ENCODE measurements at regions of chr11 and their contacts with region 1.

Region 1: GRCh38 chr11:65637794-65638317 is at the start of gene SIPA1:
- DNase-seq: peak; percentile 86
- ATAC-seq: peak; percentile 35
- H3K4me3 Mint-ChIP-seq: peak within 1 kb of the TSS; percentile 94
- H3K27ac Mint-ChIP-seq: peak within 1 kb of the TSS; percentile 96
- H3K4me1 Mint-ChIP-seq: peaks cover 51% of the 10 kb centered on the region
- H3K27me3 Mint-ChIP-seq: no peaks in the 10 kb centered on the region
- CTCF ChIP-seq: no peak
- total RNA-seq, gene SIPA1: 236 and 252 TPM in 2 replicates

Region 2: GRCh38 chr11:65575568-65576231 is 62.2 kb before region 1 on chr11 and contains the start of gene EHBP1L1:
- CTCF ChIA-PET with region 1: interaction called, 5 read pairs
- POLR2A ChIA-PET with region 1: interaction called, 39 read pairs
- intact Hi-C with region 1: loop called (anchors 1 kb)
- DNase-seq: peak; percentile 76
- ATAC-seq: peak; percentile 22
- H3K4me3 Mint-ChIP-seq: peak within 1 kb of the TSS; percentile 91
- H3K27ac Mint-ChIP-seq: peak within 1 kb of the TSS; percentile 93
- H3K4me1 Mint-ChIP-seq: peaks cover 64% of the 10 kb centered on the region
- H3K27me3 Mint-ChIP-seq: no peaks in the 10 kb centered on the region
- CTCF ChIP-seq: no peak
- total RNA-seq, gene EHBP1L1: 143 and 163 TPM in 2 replicates

Region 3: DNA sequence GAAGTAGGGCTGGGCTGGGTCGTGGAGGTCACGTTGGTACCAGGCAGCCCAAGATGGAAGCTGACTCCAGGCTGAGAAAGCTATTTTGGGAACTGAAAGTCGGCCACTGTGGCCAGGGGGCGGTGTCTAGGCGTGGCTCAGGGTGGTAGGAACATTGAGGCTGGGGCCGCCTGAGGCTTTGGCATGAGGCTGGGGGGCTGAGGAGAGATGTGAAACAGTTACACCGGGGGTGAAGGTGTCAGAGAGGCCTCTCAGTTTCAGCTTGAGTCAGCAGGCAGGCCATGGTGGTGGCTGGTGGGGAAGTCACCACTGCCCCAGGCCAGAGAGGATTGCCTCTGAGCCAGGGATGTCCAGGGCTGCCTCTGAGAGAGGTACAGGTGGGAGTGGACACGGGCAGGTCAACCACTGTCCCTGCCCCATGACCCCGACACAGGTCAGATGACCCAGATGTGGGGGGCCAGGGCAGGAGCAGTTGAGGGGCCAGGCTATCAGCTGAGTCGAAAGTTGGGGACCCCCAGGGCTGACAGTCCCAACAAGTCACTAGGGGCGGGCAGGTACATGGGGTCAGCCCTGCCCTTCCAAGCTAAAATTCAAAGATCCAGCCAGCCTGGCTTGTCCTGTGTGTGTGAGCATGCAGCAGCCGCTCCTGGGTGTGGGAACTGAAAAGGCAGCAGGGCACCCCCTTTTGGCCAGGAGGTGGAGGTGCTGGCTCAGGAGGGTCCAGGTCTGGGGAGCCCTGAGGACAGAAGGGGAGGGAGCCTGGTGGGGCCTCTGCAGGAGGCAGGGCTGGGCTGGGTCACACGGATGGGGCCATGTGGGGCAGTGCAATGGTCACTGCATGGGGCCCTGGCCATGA is 49.4 kb before region 1 on chr11:
- CTCF ChIA-PET with region 1: interaction called, 5 read pairs
- POLR2A ChIA-PET with region 1: interaction called, 26 read pairs
- intact Hi-C with region 1: no loop called
- DNase-seq: peak; percentile 76
- ATAC-seq: peak; percentile 80
- H3K4me3 Mint-ChIP-seq: peak overlapping the region; percentile 70
- H3K27ac Mint-ChIP-seq: peak overlapping the region; percentile 96
- H3K4me1 Mint-ChIP-seq: peaks cover 44% of the 10 kb centered on the region
- H3K27me3 Mint-ChIP-seq: no peaks in the 10 kb centered on the region
- CTCF ChIP-seq: peak; percentile 38

Region 4: DNA sequence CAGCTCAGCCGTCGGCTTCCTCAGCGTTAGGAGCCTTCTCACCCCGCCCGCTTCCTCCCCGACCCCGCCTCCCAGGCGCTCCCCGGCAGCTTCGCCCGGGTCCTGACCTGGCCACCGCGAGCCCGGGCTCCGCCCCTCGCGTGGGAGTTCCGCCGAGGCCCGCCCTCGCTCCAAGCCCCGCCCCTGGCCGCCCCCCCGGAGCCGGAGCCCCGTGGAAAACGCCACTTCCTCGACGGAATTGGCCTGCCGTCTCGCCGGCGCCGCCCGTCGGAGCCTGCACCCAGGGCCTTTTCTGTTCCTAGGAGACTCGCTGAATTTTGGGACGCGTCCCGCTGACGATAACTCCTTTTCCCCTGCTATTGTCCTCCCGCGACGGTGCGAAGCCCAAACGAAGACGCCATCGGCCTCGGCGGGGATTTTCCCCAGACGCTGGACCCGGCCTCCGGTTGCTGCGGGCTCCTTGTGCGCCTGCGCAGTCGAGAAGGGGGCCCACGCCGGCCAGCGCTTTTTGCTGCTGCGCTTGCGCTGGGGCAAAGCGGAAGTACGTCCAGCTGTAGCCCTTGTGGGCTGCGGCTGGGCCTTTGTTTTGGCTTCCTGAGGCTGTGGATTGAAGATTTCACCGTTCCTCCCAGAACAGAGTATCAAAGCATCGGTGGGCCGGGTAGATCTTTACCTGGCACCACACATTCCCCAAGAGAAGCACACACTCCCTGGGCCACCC is 14.8 kb after region 1 on chr11:
- CTCF ChIA-PET with region 1: interaction called, 5 read pairs
- POLR2A ChIA-PET with region 1: interaction called, 617 read pairs
- intact Hi-C with region 1: loop called (anchors 1 kb)
- DNase-seq: peak; percentile 98
- ATAC-seq: peak; percentile 89
- H3K4me3 Mint-ChIP-seq: peak overlapping the region; percentile 90
- H3K27ac Mint-ChIP-seq: peak overlapping the region; percentile 95
- H3K4me1 Mint-ChIP-seq: peaks cover 44% of the 10 kb centered on the region
- H3K27me3 Mint-ChIP-seq: no peaks in the 10 kb centered on the region
- CTCF ChIP-seq: no peak

Region 5: GRCh38 chr11:65662799-65663638 is 25.2 kb after region 1 on chr11 and contains the start of gene RELA:
- CTCF ChIA-PET with region 1: interaction called, 7 read pairs
- POLR2A ChIA-PET with region 1: interaction called, 617 read pairs
- intact Hi-C with region 1: loop called (anchors 1 kb)
- DNase-seq: peak; percentile 91
- ATAC-seq: peak; percentile 87
- H3K4me3 Mint-ChIP-seq: peak within 1 kb of the TSS; percentile 87
- H3K27ac Mint-ChIP-seq: peak within 1 kb of the TSS; percentile 93
- H3K4me1 Mint-ChIP-seq: peaks cover 35% of the 10 kb centered on the region
- H3K27me3 Mint-ChIP-seq: no peaks in the 10 kb centered on the region
- CTCF ChIP-seq: no peak
- total RNA-seq, gene RELA: 110 and 119 TPM in 2 replicates

Region 6: GRCh38 chr11:65981972-65982823 is 344.3 kb after region 1 on chr11:
- CTCF ChIA-PET with region 1: no interaction called
- POLR2A ChIA-PET with region 1: no interaction called
- intact Hi-C with region 1: no loop called
- DNase-seq: no peak
- ATAC-seq: no peak
- H3K4me3 Mint-ChIP-seq: no peak overlapping the region
- H3K27ac Mint-ChIP-seq: no peak overlapping the region
- H3K4me1 Mint-ChIP-seq: no peaks in the 10 kb centered on the region
- H3K27me3 Mint-ChIP-seq: no peaks in the 10 kb centered on the region
- CTCF ChIP-seq: no peak

Region 7: DNA sequence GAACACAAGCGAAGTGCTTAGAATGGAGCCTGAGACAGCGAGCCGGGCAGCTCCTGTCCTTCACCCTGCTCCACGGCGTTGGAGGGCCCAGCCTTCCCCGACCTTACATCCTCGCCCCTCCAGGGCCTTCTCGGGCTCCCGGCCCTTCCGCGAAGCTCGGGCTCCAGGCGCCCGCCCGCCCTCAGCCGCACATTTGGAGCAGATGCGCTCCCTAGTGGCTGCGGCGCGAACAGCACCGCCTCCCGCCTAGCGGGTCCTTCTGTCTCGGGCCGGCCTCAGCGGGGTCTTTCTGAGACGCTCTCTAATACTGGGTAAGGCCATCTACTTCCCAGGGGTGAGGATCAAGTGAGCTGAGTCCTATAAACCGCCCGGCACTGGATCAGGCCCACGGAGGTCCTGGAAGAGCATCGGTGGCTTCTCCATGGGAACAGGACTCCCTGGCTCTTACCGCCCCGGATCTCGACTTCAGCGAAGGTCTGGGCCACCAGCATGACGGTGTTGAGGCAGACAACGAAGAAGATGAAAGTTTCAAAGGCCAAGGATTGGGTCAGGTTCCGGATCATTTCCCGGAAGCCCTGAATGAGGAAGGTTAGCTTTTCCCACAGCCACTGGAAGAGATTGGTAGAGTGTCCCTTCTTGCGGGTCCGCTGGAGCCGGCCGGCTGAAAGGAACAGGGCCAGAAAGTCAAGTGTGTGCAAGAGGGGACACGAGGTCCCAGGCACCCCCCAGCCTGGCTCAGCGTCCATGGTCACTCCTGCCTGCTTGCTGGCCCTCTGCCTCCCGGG is 384.7 kb after region 1 on chr11:
- CTCF ChIA-PET with region 1: no interaction called
- POLR2A ChIA-PET with region 1: interaction called, 10 read pairs
- intact Hi-C with region 1: no loop called
- DNase-seq: peak; percentile 82
- ATAC-seq: peak; percentile 98
- H3K4me3 Mint-ChIP-seq: peak overlapping the region; percentile 24
- H3K27ac Mint-ChIP-seq: no peak overlapping the region
- H3K4me1 Mint-ChIP-seq: peaks cover 4% of the 10 kb centered on the region
- H3K27me3 Mint-ChIP-seq: peaks cover 8% of the 10 kb centered on the region
- CTCF ChIP-seq: peak; percentile 25

Measured in activated B cell treated with CpG ODN at 0.5 μM for 24 hours (primary cell).